Ascending aorta (tissue), 2 donors: ENCODE measurements at regions of chr2 and their contacts with region 1.

Region 1: DNA sequence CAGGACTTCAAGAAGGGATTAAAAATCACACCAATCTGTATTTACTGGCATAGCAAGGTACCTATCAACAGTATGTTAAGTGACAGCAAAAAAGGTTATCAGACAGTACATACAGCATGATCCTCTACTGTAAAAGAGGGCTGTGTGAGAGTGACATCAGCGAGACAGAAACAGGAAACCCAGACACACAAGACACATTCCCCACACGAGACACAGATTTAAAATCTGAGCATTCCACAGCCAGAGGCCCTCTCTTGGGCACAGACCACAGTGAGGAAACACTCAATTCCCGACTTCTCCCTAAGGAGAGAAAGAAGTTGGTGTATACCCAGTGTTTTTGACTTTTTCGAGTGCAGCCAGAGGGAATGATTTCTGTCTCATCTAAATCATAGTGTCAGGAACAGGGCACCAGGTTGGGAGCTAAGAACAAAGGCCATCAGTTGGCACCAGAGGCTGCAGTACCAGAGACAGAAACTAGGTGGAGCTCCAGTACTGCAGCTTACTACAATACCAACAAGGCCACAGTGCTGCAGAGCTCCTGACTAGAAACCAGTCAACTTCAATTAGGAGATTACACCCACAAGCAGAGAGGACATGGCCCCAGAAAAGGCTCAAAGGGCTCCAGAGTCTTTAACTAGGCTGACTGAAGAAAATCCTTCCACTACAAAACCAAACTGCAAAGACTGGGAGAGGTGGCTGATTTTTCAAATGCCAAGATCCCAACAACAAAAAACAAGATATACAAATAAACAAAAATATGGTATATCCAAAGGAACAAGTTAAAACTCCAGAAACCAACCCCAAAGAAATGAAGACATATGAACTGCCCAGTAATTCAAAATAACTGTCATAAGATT is 41.0 kb downstream of the UNC50 start:
- DNase-seq: peak; percentile 40 to 91
- H3K4me3 ChIP-seq: no peak overlapping the region
- H3K27ac ChIP-seq: no peak overlapping the region
- H3K4me1 ChIP-seq: no peaks in the 10 kb centered on the region
- H3K27me3 ChIP-seq: no peaks in the 10 kb centered on the region
- CTCF ChIP-seq: peak; percentile 94 to 99 (median 97)

Region 2: DNA sequence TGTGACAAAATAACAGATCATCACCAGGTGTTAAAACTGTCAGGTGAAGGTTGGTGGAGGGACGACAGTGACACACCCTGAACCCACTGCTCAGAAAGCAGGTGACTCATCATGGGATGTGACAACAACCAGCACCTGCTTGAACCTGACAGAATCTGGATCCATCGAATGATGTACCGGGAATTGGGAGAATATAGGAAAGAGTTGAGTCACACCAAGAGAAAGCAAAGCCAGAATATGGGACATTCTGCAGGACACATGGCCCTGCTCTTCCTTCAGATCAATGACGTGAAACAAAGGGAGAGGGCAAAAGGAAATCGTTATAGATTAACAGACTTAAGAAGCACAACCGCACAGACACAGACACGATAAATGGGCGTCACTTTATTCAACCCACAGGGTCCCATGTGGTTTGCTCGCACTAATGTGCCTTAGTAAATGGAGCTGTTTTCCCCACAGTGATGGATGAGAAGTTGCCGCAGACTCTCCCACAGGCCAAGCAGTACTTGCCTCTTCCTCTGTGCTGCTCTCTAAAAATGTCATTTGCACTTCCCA is 186.5 kb after region 1 on chr2:
- intact Hi-C with region 1: loop called (anchors 1 kb)
- DNase-seq: no peak
- H3K4me3 ChIP-seq: no peak overlapping the region
- H3K27ac ChIP-seq: no peak overlapping the region
- H3K4me1 ChIP-seq: no peaks in the 10 kb centered on the region
- H3K27me3 ChIP-seq: no peaks in the 10 kb centered on the region
- CTCF ChIP-seq: no peak